ENCODE measurements at regions of chr5 and their contacts with region 1.

Region 1: DNA sequence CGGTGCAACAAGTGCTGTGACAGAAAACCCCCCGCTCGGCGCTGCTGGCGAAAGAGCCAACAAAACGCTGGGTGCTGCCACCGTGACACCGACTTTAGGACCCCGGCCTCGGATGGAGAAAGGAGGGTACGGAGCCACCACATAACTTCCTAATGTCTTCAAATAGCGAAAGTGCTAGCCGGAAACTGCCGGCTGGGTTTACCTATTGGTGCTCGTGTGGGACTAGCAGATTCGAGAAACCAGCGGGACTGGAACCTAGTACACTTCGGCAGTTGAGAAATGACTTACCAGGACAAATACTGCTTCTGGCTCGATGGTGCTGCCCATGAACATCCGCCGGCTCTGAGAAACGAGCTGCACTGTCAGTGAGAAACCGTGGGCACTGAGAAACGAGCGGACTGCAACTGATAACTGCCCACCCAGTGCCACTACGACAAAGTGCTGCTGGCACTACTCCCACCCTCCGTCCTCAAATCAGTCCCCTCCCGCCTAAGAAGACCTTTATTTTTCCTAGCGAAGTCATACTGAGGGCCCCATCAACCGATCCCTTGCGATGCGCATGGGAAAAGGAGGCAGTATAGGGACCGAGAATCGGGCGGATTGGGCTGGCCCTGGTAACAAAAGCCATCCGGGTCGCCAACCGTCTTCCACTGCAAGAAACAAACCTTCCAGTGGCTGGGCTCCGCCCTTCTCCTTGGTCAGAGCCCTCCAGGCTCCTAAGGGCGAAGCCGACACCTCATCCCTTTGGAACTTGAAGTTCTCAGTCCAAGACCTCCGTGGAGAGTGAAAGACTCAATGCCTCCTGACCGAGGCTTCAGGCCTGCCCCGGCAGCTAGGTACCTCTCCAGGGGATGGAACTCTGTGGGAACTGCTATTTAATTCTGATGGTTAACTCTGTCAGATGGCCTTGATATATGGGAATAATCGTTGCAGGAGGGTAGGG is 27.0 kb upstream of the ANXA2R start:
- DNase-seq: peak; percentile 91
- ATAC-seq: peak; percentile 51
- H3K4me3 Mint-ChIP-seq: peak overlapping the region; percentile 97
- H3K27ac Mint-ChIP-seq: peak overlapping the region; percentile 99
- H3K4me1 Mint-ChIP-seq: peaks cover 37% of the 10 kb centered on the region
- H3K27me3 Mint-ChIP-seq: no peaks in the 10 kb centered on the region

Region 2: GRCh38 chr5:42908509-42909488 is 158.3 kb before region 1 on chr5:
- CTCF ChIA-PET with region 1: interaction called, 21 read pairs
- POLR2A ChIA-PET with region 1: interaction called, 8 read pairs
- intact Hi-C with region 1: loop called in 1 of 2 experiments (anchors 1 kb)
- DNase-seq: peak; percentile 95
- ATAC-seq: peak; percentile 95
- H3K4me3 Mint-ChIP-seq: peak overlapping the region; percentile 75
- H3K27ac Mint-ChIP-seq: peak overlapping the region; percentile 48
- H3K4me1 Mint-ChIP-seq: peaks cover 14% of the 10 kb centered on the region
- H3K27me3 Mint-ChIP-seq: peaks cover 8% of the 10 kb centered on the region

Region 3: DNA sequence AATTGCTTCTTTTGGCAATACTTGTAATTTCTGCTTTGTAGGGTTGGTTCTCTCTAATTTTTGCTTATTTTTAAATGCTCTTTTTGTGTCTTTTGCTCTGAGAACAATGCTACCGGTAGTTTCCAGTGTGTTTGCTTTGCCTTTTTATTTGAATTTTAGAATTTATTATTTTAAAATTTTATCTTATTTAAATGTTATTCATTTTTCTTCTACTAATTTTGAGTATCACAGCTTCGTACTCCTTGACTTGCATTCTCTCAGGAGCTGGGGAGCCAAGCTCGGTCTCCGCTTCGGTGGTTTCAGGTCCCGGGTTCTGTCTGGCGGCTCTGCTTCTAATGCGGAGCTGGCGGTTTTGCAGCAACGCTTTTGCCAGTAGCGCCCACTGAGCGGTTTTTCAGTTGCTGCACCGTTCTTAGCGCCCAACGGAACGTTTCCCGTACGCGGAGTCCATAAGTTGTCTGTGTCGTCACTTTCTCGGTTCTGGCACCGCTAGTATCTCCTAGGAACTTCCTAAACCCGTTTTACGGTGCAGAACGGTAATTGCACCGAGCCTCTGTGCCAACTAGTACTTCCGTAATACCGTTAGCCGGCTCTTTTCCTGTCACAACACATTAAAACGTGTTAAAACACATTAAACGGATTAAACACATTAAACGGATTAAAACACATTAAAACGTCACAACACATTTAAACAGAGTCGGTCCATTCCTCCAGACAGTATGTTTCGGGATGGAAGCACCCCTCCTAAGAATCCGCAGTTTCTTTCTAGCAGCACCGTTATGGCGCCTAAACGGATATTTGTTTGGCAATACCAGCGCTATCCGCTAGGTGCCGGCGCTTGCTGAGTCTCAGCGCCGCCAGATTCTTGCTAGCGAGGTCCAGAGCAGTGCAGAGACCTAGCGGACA is 72.6 kb before region 1 on chr5:
- CTCF ChIA-PET with region 1: interaction called, 10 read pairs
- POLR2A ChIA-PET with region 1: interaction called, 7 read pairs
- intact Hi-C with region 1: loop called (anchors 1 kb)
- DNase-seq: peak; percentile 93
- ATAC-seq: peak; percentile 67
- H3K4me3 Mint-ChIP-seq: peak overlapping the region; percentile 98
- H3K27ac Mint-ChIP-seq: peak overlapping the region; percentile 100
- H3K4me1 Mint-ChIP-seq: peaks cover 25% of the 10 kb centered on the region
- H3K27me3 Mint-ChIP-seq: no peaks in the 10 kb centered on the region

Region 4: GRCh38 chr5:43019614-43020293 is 47.3 kb before region 1 on chr5:
- CTCF ChIA-PET with region 1: interaction called, 26 read pairs
- POLR2A ChIA-PET with region 1: interaction called, 17 read pairs
- intact Hi-C with region 1: loop called (anchors 1 kb)
- DNase-seq: peak; percentile 91
- ATAC-seq: peak; percentile 70
- H3K4me3 Mint-ChIP-seq: peak overlapping the region; percentile 94
- H3K27ac Mint-ChIP-seq: peak overlapping the region; percentile 99
- H3K4me1 Mint-ChIP-seq: peaks cover 33% of the 10 kb centered on the region
- H3K27me3 Mint-ChIP-seq: no peaks in the 10 kb centered on the region

Region 5: GRCh38 chr5:43105369-43106289 is 38.6 kb after region 1 on chr5:
- CTCF ChIA-PET with region 1: interaction called, 5 read pairs
- POLR2A ChIA-PET with region 1: interaction called, 5 read pairs
- intact Hi-C with region 1: loop called (anchors 1 kb)
- DNase-seq: peak; percentile 93
- ATAC-seq: peak; percentile 91
- H3K4me3 Mint-ChIP-seq: peak overlapping the region; percentile 71
- H3K27ac Mint-ChIP-seq: peak overlapping the region; percentile 91
- H3K4me1 Mint-ChIP-seq: peaks cover 43% of the 10 kb centered on the region
- H3K27me3 Mint-ChIP-seq: no peaks in the 10 kb centered on the region

Region 6: GRCh38 chr5:43215073-43215631 is 148.1 kb after region 1 on chr5:
- CTCF ChIA-PET with region 1: no interaction called
- POLR2A ChIA-PET with region 1: no interaction called
- intact Hi-C with region 1: no loop called
- DNase-seq: no peak
- ATAC-seq: no peak
- H3K4me3 Mint-ChIP-seq: no peak overlapping the region
- H3K27ac Mint-ChIP-seq: no peak overlapping the region
- H3K4me1 Mint-ChIP-seq: no peaks in the 10 kb centered on the region
- H3K27me3 Mint-ChIP-seq: peaks cover 1% of the 10 kb centered on the region

Region 7: GRCh38 chr5:43396762-43397304 is 329.8 kb after region 1 on chr5:
- CTCF ChIA-PET with region 1: interaction called, 5 read pairs
- POLR2A ChIA-PET with region 1: no interaction called
- intact Hi-C with region 1: loop called in 1 of 2 experiments (anchors 5 kb)
- DNase-seq: peak; percentile 82
- ATAC-seq: peak; percentile 97
- H3K4me3 Mint-ChIP-seq: peak overlapping the region; percentile 84
- H3K27ac Mint-ChIP-seq: peak overlapping the region; percentile 96
- H3K4me1 Mint-ChIP-seq: peaks cover 26% of the 10 kb centered on the region
- H3K27me3 Mint-ChIP-seq: no peaks in the 10 kb centered on the region

Region 8: GRCh38 chr5:44321144-44321725 is 1254.2 kb after region 1 on chr5:
- CTCF ChIA-PET with region 1: no interaction called
- POLR2A ChIA-PET with region 1: no interaction called
- intact Hi-C with region 1: no loop called
- DNase-seq: no peak
- ATAC-seq: no peak
- H3K4me3 Mint-ChIP-seq: no peak overlapping the region
- H3K27ac Mint-ChIP-seq: no peak overlapping the region
- H3K4me1 Mint-ChIP-seq: no peaks in the 10 kb centered on the region
- H3K27me3 Mint-ChIP-seq: no peaks in the 10 kb centered on the region

Measured in activated CD4-positive, alpha-beta T cell treated with anti-CD3 and anti-CD28 coated beads for 36 hours (primary cell).